ENCODE measurements at regions of chr3 and their contacts with region 1.

Region 1: DNA sequence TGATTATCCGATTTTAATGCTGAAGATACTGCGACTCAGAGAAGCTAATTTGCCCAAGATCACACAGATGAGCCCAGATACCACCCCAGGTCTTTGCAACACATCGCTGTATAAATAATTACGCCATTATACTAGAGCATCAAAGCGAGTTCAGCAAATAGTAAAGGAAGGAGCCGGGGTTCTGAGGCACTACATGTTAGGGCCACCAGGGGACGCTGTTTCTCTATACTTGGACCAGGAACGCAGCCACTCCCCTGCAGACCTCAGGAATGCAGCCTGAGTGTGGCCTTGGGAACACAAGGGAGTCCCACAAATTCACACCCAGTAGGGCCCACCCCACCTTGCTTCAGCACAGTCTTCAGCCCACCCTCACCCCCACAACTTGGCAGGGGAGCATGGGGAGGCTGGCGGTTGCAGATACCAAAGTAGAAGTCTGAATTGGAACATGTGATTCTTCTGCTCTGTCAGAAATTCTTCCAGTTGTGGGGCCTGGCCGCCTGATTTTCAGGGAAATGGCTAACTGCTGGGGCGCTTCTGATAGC is 57.8 kb upstream of the RYK start:
- DNase-seq: peak; percentile 67
- H3K4me3 ChIP-seq: no peak overlapping the region
- H3K27ac ChIP-seq: peak overlapping the region; percentile 19
- H3K4me1 ChIP-seq: peaks cover 40% of the 10 kb centered on the region
- H3K27me3 ChIP-seq: no peaks in the 10 kb centered on the region
- CTCF ChIP-seq: peak; percentile 99

Region 2: DNA sequence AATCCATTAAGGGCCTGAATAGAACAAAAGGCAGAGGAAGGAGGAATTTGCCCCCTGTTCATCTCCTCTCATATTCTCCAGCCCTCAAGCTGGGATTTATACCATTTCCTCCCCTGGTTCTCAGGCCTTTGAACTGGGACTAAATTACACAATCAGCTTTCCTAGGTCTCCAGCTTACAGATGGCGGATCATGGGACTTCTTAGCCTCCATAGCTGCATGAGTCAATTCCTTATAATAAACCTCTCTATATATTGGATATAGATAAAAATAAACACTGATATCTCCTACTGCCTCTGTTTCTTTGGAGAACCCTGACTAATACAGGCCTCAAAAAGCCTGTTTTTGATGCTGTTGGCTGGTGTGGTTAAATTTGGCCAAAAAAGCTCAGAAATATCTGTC is 1354.7 kb before region 1 on chr3:
- CTCF ChIA-PET with region 1: no interaction called
- dilution Hi-C with region 1: no loop called
- in situ Hi-C with region 1: no loop called
- intact Hi-C with region 1: no loop called
- DNase-seq: no peak
- H3K4me3 ChIP-seq: no peak overlapping the region
- H3K27ac ChIP-seq: no peak overlapping the region
- H3K4me1 ChIP-seq: no peaks in the 10 kb centered on the region
- H3K27me3 ChIP-seq: no peaks in the 10 kb centered on the region
- CTCF ChIP-seq: no peak

Region 3: GRCh38 chr3:134212906-134213665 is 95.3 kb before region 1 on chr3:
- CTCF ChIA-PET with region 1: interaction called, 4 read pairs
- dilution Hi-C with region 1: no loop called
- in situ Hi-C with region 1: loop called in 1 of 2 experiments (anchors 10 kb)
- intact Hi-C with region 1: loop called (anchors 2 kb)
- DNase-seq: peak; percentile 83
- H3K4me3 ChIP-seq: no peak overlapping the region
- H3K27ac ChIP-seq: no peak overlapping the region
- H3K4me1 ChIP-seq: peaks cover 33% of the 10 kb centered on the region
- H3K27me3 ChIP-seq: no peaks in the 10 kb centered on the region
- CTCF ChIP-seq: peak; percentile 99 to 100

Region 4: DNA sequence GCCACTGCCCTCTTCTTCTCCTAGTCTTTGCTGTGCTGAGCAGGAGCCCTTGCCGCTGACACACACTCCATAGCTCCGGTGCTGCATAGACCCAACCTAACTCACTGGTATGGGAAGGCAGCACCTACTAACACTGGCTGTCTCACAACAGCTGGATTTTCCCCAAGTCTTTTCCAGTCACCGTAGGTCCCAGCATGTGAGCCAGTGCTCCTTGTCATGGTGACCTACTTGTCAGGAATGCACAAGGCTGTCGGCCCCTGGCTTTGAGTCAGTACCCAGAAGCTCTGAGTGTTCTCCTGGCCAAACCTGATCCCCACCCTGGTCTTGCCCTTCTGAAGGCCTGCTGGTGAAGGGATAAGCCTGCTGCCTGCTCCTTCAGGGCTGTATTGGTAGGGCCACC is 40.1 kb after region 1 on chr3:
- CTCF ChIA-PET with region 1: no interaction called
- dilution Hi-C with region 1: no loop called
- in situ Hi-C with region 1: no loop called
- intact Hi-C with region 1: loop called (anchors 1 kb)
- DNase-seq: peak; percentile 76
- H3K4me3 ChIP-seq: no peak overlapping the region
- H3K27ac ChIP-seq: no peak overlapping the region
- H3K4me1 ChIP-seq: peaks cover 42% of the 10 kb centered on the region
- H3K27me3 ChIP-seq: no peaks in the 10 kb centered on the region
- CTCF ChIP-seq: no peak

Region 5: DNA sequence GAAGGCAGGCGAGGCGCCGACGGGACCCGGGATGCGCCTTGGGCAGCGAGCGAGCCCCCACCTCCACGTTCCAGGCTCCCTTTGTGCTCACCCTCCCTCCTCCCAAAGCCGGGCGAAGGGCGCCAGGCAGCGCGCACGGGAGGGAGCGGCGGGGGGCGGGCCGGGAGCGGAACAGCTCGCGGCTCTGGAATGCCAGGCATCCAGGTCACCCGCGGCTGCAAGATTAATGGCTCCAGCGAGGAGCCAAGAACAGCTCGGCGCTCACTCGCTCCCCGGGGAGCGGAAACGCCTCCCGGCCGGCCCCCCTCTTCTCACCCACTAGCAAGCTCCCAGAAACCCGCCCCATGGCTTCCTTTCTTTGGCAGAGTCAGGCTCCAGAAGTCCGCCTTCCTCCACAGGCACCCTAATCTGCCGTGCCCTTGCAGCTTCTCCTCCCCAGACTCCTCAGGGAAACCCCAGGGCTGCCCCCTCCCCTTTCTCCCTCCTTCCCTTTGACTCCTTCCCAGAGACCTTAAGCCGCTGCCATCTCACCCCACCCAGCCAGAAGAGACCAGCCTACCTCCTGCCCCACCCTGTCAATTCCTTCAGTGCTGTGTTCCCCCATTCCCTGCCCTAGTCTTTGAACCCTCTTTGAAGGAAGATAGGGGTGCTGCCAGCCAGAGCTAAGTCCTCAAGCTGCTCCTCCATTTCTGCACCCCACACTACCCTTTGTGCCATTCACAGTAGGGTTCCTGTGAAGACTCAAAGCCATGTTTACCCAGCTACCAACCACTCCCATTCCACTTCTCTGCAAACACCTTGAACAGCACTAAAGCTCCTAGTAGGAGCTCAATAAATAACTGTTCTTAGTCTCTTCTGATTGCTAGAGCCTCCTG is 55.9 kb after region 1 on chr3:
- CTCF ChIA-PET with region 1: interaction called, 5 read pairs
- dilution Hi-C with region 1: no loop called
- in situ Hi-C with region 1: loop called (anchors 5 kb)
- intact Hi-C with region 1: no loop called
- DNase-seq: peak; percentile 93
- H3K4me3 ChIP-seq: peak overlapping the region in 2 of 3 experiments; percentile 17 to 23
- H3K27ac ChIP-seq: peak overlapping the region; percentile 28
- H3K4me1 ChIP-seq: peaks cover 88% of the 10 kb centered on the region
- H3K27me3 ChIP-seq: no peaks in the 10 kb centered on the region
- CTCF ChIP-seq: no peak

Region 6: DNA sequence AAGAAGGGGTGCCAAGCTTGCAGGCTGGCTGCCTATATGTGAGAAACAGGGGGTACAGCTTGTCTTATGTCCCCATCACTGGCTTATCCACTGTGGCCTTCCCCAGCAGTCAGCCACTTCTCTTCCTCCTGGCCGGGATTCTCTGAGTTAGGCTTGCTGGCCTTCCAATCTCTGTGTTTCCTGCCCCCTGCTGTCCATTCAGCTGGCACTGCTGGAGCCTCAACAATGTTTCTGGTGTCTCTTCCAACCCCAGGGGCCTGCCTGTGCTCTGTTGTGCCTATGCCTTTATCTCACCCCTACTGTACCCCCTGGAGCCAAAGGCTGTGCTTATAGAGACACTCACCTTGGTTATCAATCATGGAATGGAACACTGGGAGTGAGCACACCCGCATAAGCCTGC is 140.9 kb after region 1 on chr3:
- CTCF ChIA-PET with region 1: no interaction called
- dilution Hi-C with region 1: no loop called
- in situ Hi-C with region 1: no loop called
- intact Hi-C with region 1: loop called (anchors 1 kb)
- DNase-seq: peak; percentile 45
- H3K4me3 ChIP-seq: no peak overlapping the region
- H3K27ac ChIP-seq: no peak overlapping the region
- H3K4me1 ChIP-seq: peaks cover 26% of the 10 kb centered on the region
- H3K27me3 ChIP-seq: no peaks in the 10 kb centered on the region
- CTCF ChIP-seq: peak; percentile 73 to 84

Region 7: GRCh38 chr3:134485718-134486576 is 177.5 kb after region 1 on chr3 and contains the starts of genes ANAPC13 and CEP63:
- CTCF ChIA-PET with region 1: no interaction called
- dilution Hi-C with region 1: no loop called
- in situ Hi-C with region 1: loop called in 1 of 2 experiments (anchors 5 kb)
- intact Hi-C with region 1: no loop called
- DNase-seq: peak; percentile 98
- H3K4me3 ChIP-seq: peak within 1 kb of the TSS; percentile 70 to 90 (median 76)
- H3K27ac ChIP-seq: peak within 1 kb of the TSS; percentile 87
- H3K4me1 ChIP-seq: peaks cover 38% of the 10 kb centered on the region
- H3K27me3 ChIP-seq: no peaks in the 10 kb centered on the region
- CTCF ChIP-seq: no peak
- total RNA-seq, gene ANAPC13: 32.2 to 40.5 TPM
- total RNA-seq, gene CEP63: 7.2 to 25.3 TPM

Measured in mammary epithelial cell (primary cell).